Transverse colon (tissue), 4 donors: ENCODE measurements at regions of chr3 and their contacts with region 1.

Region 1: GRCh38 chr3:152307829-152308474 is 39.2 kb downstream of the MBNL1 start:
- DNase-seq: no peak
- H3K4me3 ChIP-seq: no peak overlapping the region
- H3K27ac ChIP-seq: peak overlapping the region; percentile 88 to 91 (median 90)
- H3K4me1 ChIP-seq: peaks cover 36 to 88% (median 71%) of the 10 kb centered on the region in 4 donors
- H3K27me3 ChIP-seq: no peaks in the 10 kb centered on the region
- CTCF ChIP-seq: no peak
- EP300 ChIP-seq: no peak
- POLR2A ChIP-seq: no peak

Region 2: GRCh38 chr3:151999936-152000335 is 308.0 kb before region 1 on chr3:
- in situ Hi-C with region 1: no loop called
- intact Hi-C with region 1: no loop called
- DNase-seq: no peak
- H3K4me3 ChIP-seq: no peak overlapping the region
- H3K27ac ChIP-seq: no peak overlapping the region
- H3K4me1 ChIP-seq: peaks cover 0 to 4% (median 0%) of the 10 kb centered on the region in 4 donors
- H3K27me3 ChIP-seq: no peaks in the 10 kb centered on the region
- CTCF ChIP-seq: no peak
- EP300 ChIP-seq: no peak
- POLR2A ChIP-seq: no peak

Region 3: GRCh38 chr3:152385761-152386160 is 77.8 kb after region 1 on chr3:
- in situ Hi-C with region 1: no loop called
- intact Hi-C with region 1: loop called (anchors 2 kb)
- DNase-seq: no peak
- H3K4me3 ChIP-seq: no peak overlapping the region
- H3K27ac ChIP-seq: peak overlapping the region; percentile 64 to 79 (median 70)
- H3K4me1 ChIP-seq: peaks cover 22 to 89% (median 47%) of the 10 kb centered on the region in 4 donors
- H3K27me3 ChIP-seq: no peaks in the 10 kb centered on the region
- CTCF ChIP-seq: no peak
- EP300 ChIP-seq: no peak
- POLR2A ChIP-seq: no peak